ENCODE measurements at regions of chr2 and their contacts with region 1.

Region 1: GRCh38 chr2:118088051-118089024 is at the start of gene INSIG2:
- DNase-seq: peak; percentile 94
- H3K4me3 Mint-ChIP-seq: peak within 1 kb of the TSS; percentile 86
- H3K27ac Mint-ChIP-seq: peak within 1 kb of the TSS; percentile 83
- H3K4me1 Mint-ChIP-seq: peaks cover 16% of the 10 kb centered on the region
- H3K27me3 Mint-ChIP-seq: no peaks in the 10 kb centered on the region
- total RNA-seq, gene INSIG2: 14.3 to 19.3 TPM

Region 2: DNA sequence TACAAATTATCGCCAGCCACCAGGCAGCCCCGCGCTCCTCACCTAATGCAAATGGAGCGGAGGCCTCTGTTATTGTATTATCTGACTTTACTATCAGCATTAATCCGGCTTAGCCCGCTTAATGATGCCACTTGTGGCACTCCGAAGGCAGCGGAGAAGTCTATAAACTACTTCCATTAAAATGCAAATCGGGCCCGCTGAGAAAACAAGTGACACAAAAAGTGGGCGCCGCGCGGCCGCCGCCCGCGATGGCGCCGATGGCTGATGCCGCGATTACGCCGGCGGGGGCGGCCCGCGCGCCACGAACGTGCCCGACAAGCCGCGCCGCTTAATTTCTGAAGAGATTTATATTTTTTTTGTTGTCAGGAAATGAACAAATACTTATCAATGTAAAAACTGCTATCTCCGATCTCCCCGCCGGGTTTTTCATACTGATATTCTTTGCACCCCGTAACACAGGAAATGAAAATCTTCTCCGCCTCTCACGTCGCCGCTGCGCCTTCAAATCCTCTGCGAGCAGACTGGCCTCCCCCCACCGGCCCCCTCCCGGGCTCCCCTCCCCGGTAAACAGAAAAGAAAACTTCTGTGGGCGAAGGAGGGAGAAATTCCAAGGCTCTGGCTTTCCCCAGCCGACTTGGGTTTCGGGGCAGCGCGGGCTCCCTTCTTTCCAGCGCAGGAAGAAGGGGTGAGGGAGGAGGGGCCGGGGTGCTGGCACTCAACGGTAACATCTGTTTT is 221.8 kb after region 1 on chr2:
- CTCF ChIA-PET with region 1: no interaction called
- intact Hi-C with region 1: loop called (anchors 1 kb)
- DNase-seq: peak; percentile 69
- H3K4me3 Mint-ChIP-seq: peak overlapping the region; percentile 79
- H3K27ac Mint-ChIP-seq: peak overlapping the region; percentile 90
- H3K4me1 Mint-ChIP-seq: peaks cover 2% of the 10 kb centered on the region
- H3K27me3 Mint-ChIP-seq: no peaks in the 10 kb centered on the region

Measured in activated naive CD4-positive, alpha-beta T cell treated with anti-CD3 and anti-CD28 coated beads for 36 hours (primary cell).